Dorsolateral prefrontal cortex (tissue), 120 donors: ENCODE measurements at regions of chr2 and their contacts with region 1.

Region 1: DNA sequence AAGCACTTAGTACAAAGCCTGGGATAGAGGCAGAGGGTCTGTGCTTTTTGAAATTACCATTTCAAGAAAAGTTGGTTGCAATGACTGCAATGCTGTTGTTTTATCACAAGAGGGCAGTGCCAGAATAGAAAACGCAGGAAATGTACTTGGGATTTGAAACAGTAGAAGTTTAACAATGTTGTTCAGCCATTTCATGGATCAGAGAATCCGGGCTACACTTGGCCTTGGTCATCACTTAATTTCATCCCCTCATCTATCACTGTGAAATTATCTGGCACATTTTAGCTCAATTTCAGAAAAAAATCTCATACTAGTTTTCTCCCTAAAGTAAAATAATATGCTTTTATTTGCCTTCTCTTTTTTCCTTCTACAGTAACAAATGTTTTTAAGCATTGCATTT is 70.8 kb downstream of the RAPGEF4 start:
- DNase-seq: peak in 2 of 10 donors; percentile 23 to 35
- H3K4me3 ChIP-seq: peak overlapping the region in 43 of 59 donors; percentile 1 to 51 (median 24)
- H3K27ac ChIP-seq: peak overlapping the region in 47 of 59 donors; percentile 8 to 76 (median 46)
- H3K27me3 ChIP-seq: no peaks in the 10 kb centered on the region
- CTCF ChIP-seq: peak; percentile 84 to 98 (median 91)

Region 2: GRCh38 chr2:172179045-172179701 is 627.3 kb before region 1 on chr2:
- intact Hi-C with region 1: no loop called
- DNase-seq: no peak
- H3K4me3 ChIP-seq: no peak overlapping the region
- H3K27ac ChIP-seq: no peak overlapping the region
- H3K27me3 ChIP-seq: peaks cover 0 to 7% (median 0%) of the 10 kb centered on the region in 45 donors
- CTCF ChIP-seq: no peak

Region 3: DNA sequence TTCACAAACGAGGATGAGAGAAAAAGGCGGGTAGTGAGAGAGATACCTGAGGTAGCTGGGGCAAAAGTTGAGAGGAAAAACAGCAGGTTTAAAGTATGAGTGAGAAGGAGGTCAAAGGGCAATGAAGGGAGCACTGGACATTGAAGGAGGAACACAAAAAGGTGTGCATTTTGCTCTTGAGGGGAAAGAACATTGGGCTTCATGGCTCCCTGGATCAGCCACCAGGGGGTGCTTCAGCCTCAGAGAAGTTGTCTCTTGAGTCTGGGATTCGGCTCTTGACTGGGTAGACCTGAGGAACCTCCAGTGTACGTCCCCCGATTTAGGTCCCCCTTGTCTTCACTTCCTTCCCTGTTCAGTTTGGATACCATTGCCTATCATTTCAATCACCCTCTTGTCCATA is 57.7 kb after region 1 on chr2:
- intact Hi-C with region 1: loop called in 1 of 2 experiments (anchors 5 kb)
- DNase-seq: peak in 6 of 10 donors; percentile 39 to 66 (median 53)
- H3K4me3 ChIP-seq: no peak overlapping the region
- H3K27ac ChIP-seq: no peak overlapping the region
- H3K27me3 ChIP-seq: peaks cover 0 to 3% (median 0%) of the 10 kb centered on the region in 45 donors
- CTCF ChIP-seq: peak; percentile 42 to 79 (median 68)

Region 4: GRCh38 chr2:172931918-172932520 is 125.5 kb after region 1 on chr2:
- intact Hi-C with region 1: loop called (anchors 2 kb)
- DNase-seq: peak in 7 of 10 donors; percentile 58 to 86 (median 69)
- H3K4me3 ChIP-seq: peak overlapping the region in 20 of 59 donors; percentile 7 to 42 (median 26)
- H3K27ac ChIP-seq: peak overlapping the region in 37 of 59 donors; percentile 6 to 85 (median 67)
- H3K27me3 ChIP-seq: no peaks in the 10 kb centered on the region
- CTCF ChIP-seq: peak; percentile 61 to 85 (median 76)

Region 5: DNA sequence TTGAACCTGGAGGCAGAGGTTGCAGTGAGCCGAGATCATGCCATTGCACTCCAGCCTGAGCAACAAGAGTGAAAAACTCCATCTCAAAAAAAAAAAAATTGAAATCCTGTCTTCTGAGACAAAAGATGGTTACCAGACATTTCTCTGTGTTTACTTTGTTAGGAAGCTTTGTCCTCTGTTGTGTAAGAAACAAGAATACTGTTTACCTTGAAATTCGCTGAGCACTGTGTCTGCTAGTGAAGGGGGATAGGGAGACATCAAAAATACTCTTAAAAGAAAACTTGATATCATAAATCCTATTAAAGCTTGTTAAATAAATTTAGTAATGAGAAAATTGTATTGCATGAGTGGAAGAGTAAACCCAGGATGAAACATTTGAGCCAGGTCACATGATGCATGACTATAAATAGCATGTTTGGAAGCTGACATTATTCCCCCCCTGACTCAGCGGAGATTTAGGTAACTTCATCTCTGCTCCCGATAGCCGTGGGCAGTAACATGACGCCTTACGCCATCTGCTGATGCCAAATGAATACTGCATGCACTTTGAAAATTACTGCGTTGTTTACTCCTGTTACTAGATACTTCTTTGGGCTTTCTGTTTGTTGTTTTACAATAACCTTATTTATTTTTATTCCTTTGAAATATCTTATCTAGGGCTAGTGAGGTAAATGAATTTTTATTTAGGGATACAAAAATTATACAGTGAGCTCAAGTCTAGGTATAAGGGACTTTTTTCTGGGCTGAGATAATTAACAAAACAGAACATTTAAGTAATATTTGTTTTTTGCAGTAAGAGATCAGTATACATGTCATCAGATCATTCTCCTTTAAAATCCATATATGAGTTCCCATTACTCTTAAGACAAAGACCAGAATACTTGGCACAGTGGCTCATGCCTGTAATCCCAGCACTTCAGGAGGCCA is 404.0 kb after region 1 on chr2:
- intact Hi-C with region 1: loop called (anchors 2 to 10 kb)
- DNase-seq: peak in 6 of 10 donors; percentile 40 to 67 (median 44)
- H3K4me3 ChIP-seq: peak overlapping the region in 2 of 59 donors; percentile 15 to 23
- H3K27ac ChIP-seq: peak overlapping the region in 21 of 59 donors; percentile 3 to 57 (median 30)
- H3K27me3 ChIP-seq: no peaks in the 10 kb centered on the region
- CTCF ChIP-seq: peak; percentile 79 to 99 (median 88)